AG04450 (cell line): ENCODE measurements at regions of chr11 and their contacts with region 1.

Region 1: DNA sequence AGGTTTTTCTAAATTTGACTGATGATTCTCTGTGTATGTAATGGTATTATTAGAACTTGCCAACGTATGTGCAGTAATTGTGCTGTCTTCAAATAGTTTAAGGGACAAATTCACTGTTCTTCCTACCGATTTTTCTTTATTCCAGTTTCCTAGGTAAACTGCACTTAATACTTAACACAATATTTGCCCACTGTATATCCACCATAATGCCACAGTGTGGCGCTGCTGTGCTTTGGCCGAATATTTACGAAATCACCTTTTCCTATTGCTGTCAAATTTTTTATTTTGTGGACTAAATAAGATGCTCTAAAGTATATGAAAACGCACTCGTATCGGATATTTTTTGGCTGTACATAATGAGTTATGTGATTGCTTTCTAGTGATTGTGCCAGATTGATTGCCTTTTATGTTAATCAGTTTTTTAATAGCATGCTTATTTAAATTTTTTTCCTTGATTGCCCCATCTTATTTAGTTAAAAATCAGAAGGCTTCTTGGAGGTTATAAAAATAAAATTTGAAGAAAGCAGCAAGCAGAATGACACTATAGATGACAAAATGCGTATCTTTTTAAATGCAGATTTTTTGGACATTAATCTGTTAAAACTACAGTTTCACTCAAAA is 10.5 kb downstream of the AASDHPPT start:
- DNase-seq: no peak
- H3K4me3 ChIP-seq: no peak overlapping the region
- H3K27ac ChIP-seq: no peak overlapping the region
- H3K27me3 ChIP-seq: no peaks in the 10 kb centered on the region
- CTCF ChIP-seq: peak; percentile 91

Region 2: DNA sequence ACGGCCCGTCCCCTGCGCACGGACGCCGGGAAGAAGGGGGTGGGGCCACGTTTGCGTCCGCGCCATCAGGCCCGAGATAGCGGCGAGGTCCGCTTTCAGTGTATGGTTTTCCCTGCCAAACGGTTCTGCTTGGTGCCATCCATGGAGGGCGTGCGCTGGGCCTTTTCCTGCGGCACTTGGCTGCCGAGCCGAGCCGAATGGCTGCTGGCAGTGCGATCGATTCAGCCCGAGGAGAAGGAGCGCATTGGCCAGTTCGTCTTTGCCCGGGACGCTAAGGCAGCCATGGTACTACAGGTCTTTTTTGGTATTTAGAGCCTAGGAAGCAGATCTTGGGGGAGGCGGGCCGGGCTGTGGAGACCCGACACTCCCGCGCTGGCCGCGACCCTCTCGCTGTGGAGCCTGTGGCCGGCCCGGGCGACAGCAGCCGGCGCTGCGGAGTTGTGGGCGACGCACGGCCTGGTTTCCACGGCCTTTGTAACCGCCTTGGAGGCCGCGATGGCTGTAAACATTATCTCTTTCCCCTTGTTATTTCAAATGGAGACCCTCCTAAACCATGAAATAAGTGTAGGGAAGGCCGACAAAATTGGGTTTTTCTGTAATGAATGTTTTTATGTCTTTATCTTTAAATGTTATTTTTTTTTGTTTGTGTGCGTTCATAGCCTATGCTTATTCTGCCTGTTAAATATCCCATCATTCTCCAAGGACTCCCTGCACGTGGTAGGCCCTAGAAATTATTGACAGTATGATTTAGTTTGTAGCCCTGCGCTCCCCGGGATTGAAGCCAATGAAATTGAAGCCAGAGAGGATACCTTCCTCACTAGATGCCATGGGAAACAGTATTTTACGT is 10.1 kb before region 1 on chr11 and contains the start of gene AASDHPPT:
- CTCF ChIA-PET with region 1: interaction called, 12 read pairs
- POLR2A ChIA-PET with region 1: no interaction called
- DNase-seq: no peak
- H3K4me3 ChIP-seq: peak within 1 kb of the TSS; percentile 99
- H3K27ac ChIP-seq: peak within 1 kb of the TSS; percentile 89
- H3K27me3 ChIP-seq: no peaks in the 10 kb centered on the region
- CTCF ChIP-seq: no peak
- polyA plus RNA-seq, gene AASDHPPT: 41.7 and 61.9 TPM in 2 replicates

Region 3: DNA sequence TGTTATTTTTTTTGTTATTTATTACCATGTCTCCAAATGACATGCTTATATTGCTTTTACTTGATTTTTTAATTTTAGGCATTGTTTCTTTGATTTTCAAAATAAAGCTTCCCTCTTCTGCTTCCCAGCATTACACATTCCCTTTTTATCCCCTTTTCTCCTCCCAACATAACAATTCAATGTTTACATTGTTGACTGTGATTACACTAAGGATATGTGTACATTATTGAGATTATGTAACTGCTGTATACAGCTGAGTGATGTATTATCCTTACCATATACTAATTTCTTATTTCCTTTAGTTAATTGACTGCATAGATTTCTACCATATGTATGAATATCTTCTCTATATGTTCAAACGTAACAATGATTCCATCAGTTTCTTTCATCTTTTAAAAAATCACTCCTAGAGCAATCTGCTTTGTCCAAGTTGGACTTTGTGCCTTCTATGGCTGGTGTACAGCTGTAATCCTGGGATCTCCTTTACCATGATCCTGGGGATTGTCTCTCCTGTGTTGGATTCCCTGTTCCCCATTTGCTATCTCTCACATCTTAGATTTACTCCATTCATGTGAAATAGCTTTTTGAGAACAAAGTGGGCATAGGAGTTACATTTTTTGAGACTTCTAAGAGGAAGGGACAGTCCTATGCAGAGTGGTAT is 11.1 kb after region 1 on chr11:
- CTCF ChIA-PET with region 1: interaction called, 11 read pairs
- POLR2A ChIA-PET with region 1: no interaction called
- DNase-seq: no peak
- H3K4me3 ChIP-seq: no peak overlapping the region
- H3K27ac ChIP-seq: no peak overlapping the region
- H3K27me3 ChIP-seq: no peaks in the 10 kb centered on the region
- CTCF ChIP-seq: no peak

Region 4: DNA sequence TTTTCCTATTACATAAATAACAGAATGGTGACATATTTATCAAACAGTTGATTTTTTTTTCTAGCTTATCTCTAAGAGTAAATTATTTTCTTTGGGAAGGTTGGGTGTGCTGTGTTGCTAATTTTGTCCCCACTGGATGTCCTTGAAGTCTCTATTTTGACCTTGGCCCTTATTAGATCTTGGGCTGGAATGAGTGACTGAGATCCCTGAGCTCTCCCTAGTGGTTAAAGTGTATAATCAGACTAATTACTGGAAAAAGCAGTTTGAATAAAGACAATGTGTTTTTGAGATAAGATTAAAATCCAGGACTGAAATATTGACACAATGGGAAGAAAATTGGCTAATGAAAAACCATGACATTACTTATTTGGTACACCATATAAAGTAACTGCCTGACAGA is 45.6 kb after region 1 on chr11:
- CTCF ChIA-PET with region 1: interaction called, 12 read pairs
- POLR2A ChIA-PET with region 1: no interaction called
- DNase-seq: no peak
- H3K4me3 ChIP-seq: no peak overlapping the region
- H3K27ac ChIP-seq: no peak overlapping the region
- H3K27me3 ChIP-seq: no peaks in the 10 kb centered on the region
- CTCF ChIP-seq: peak; percentile 37